Naive thymus-derived CD4-positive, alpha-beta T cell (primary cell): ENCODE measurements at regions of chr7 and their contacts with region 1.

Region 1: GRCh38 chr7:75531359-75531821 is 39.3 kb downstream of the SPDYE5 start:
- DNase-seq: no peak
- ATAC-seq: no peak
- H3K4me3 ChIP-seq: no peak overlapping the region
- H3K4me3 Mint-ChIP-seq: no peak overlapping the region
- H3K27ac ChIP-seq: no peak overlapping the region
- H3K27ac Mint-ChIP-seq: peak overlapping the region in 1 of 9 donors; percentile 47
- H3K4me1 ChIP-seq: peaks cover 2 to 8% of the 10 kb centered on the region in 2 donors
- H3K4me1 Mint-ChIP-seq: peaks cover 14 to 19% (median 15%) of the 10 kb centered on the region in 7 donors
- H3K27me3 ChIP-seq: no peaks in the 10 kb centered on the region
- H3K27me3 Mint-ChIP-seq: no peaks in the 10 kb centered on the region

Region 2: DNA sequence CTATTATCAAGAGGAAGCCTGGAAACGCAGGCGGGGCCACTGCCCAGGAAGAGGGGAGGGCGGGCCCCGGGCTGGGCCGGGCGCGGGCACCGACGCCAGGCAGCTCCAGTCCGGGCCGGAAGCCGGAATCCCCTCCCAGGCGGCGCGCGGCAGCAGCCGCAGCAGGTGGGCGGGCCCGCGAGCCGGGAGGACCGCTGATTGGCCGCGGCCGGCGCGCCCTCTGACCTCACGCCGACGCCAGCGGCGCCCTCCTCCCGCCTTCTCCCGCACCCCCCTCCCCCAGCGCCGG is 1974.3 kb before region 1 on chr7:
- CTCF ChIA-PET with region 1: no interaction called
- POLR2A ChIA-PET with region 1: no interaction called
- intact Hi-C with region 1: loop called in 1 of 2 experiments (anchors 10 kb)
- DNase-seq: peak; percentile 86 to 95 (median 91)
- ATAC-seq: peak; percentile 93
- H3K4me3 ChIP-seq: peak overlapping the region; percentile 81
- H3K4me3 Mint-ChIP-seq: peak overlapping the region; percentile 88 to 97 (median 93)
- H3K27ac ChIP-seq: peak overlapping the region; percentile 100
- H3K27ac Mint-ChIP-seq: peak overlapping the region; percentile 92 to 98 (median 95)
- H3K4me1 ChIP-seq: peaks cover 17 to 23% of the 10 kb centered on the region in 2 donors
- H3K4me1 Mint-ChIP-seq: peaks cover 24 to 41% (median 33%) of the 10 kb centered on the region in 7 donors
- H3K27me3 ChIP-seq: no peaks in the 10 kb centered on the region
- H3K27me3 Mint-ChIP-seq: no peaks in the 10 kb centered on the region

Region 3: GRCh38 chr7:74709880-74710671 is 821.3 kb before region 1 on chr7:
- CTCF ChIA-PET with region 1: no interaction called
- POLR2A ChIA-PET with region 1: no interaction called
- intact Hi-C with region 1: no loop called
- DNase-seq: no peak
- ATAC-seq: no peak
- H3K4me3 ChIP-seq: no peak overlapping the region
- H3K4me3 Mint-ChIP-seq: no peak overlapping the region
- H3K27ac ChIP-seq: no peak overlapping the region
- H3K27ac Mint-ChIP-seq: peak overlapping the region in 1 of 9 donors; percentile 66
- H3K4me1 ChIP-seq: no peaks in the 10 kb centered on the region
- H3K4me1 Mint-ChIP-seq: peaks cover 0 to 4% (median 0%) of the 10 kb centered on the region in 7 donors
- H3K27me3 ChIP-seq: no peaks in the 10 kb centered on the region
- H3K27me3 Mint-ChIP-seq: no peaks in the 10 kb centered on the region

Region 4: DNA sequence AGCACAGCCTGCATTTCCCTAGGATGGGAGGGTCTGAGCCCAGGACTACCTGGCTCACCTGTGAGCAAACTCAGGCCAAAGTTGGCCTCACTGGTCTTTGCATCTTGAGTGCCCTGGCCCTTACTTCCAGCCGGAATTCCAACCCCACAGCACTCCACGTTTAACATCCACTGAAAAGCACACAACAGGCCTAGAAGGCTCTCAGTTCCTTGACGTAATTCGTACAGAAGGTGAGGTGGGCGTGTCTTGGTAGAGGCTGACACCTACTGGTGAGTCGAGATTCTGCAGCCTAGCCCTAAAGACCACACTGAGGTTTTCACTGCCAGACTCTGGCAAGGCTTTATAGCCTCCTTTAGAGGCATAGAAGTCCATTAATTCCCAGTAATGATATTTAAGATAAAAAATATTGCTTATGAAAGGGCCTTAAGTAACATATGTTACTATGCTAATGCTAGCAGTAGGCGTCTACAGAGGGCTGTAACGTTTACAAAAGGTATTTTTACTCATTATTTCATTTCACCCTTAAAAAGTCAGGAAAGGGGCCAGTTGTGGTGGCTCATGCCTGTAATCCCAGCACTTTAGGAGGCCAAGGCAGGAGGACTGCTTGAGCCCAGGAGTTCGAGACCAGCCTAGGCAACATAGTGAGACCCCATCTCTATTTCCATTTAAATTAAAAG is 111.6 kb after region 1 on chr7:
- CTCF ChIA-PET with region 1: no interaction called
- POLR2A ChIA-PET with region 1: no interaction called
- intact Hi-C with region 1: loop called (anchors 5 kb)
- DNase-seq: peak; percentile 41 to 73 (median 64)
- ATAC-seq: peak; percentile 96
- H3K4me3 ChIP-seq: no peak overlapping the region
- H3K4me3 Mint-ChIP-seq: peak overlapping the region in 3 of 10 donors; percentile 25 to 31 (median 29)
- H3K27ac ChIP-seq: no peak overlapping the region
- H3K27ac Mint-ChIP-seq: peak overlapping the region in 5 of 9 donors; percentile 15 to 75 (median 56)
- H3K4me1 ChIP-seq: peaks cover 8 to 9% of the 10 kb centered on the region in 2 donors
- H3K4me1 Mint-ChIP-seq: peaks cover 6 to 18% (median 11%) of the 10 kb centered on the region in 7 donors
- H3K27me3 ChIP-seq: no peaks in the 10 kb centered on the region
- H3K27me3 Mint-ChIP-seq: peaks cover 0 to 23% (median 0%) of the 10 kb centered on the region in 5 donors

Region 5: DNA sequence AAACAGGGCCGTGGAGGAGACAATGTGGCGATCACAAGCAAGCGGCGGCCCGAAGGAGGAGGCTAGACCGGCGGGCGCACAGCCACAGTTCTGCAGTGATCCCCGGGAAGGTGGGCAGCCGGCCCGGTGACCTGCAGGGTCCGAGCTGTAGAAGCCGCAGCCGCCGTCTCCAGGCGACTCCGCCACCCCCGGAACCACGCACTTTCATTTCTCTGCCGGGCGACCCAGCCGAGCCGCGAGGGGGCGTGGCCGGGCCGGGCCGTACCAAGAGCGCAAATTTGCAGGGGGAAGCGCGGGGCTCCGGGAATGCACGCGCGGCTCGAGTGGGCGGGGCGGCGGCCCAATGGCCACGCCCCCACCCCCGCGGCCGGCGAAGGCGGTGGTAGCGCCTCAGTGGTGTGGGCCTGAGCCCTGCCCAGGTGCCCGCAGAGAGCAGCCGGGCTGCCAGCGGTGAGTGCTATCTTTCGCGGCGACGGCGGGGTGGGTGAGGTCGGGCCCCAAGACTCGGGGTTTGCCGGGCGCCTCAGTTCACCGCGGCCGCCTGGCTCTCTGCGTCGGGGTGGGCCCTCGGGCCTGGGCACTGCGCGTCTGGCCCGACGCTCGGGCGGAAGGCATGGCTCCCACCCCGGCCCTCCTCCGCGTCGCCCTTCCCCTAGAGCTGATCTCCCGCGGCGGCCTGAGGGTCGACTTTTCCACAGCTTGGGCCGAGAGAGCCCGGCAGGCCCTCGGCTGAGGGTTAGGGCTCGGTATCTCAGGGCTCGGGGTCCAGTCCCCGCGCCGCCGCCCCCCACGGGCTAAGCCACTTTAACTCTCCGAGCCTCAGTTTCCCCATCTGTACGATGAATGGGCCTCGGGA is 383.6 kb after region 1 on chr7 and contains the start of gene POR:
- CTCF ChIA-PET with region 1: no interaction called
- POLR2A ChIA-PET with region 1: no interaction called
- intact Hi-C with region 1: loop called in 1 of 2 experiments (anchors 1 kb)
- DNase-seq: peak; percentile 93 to 100 (median 99)
- ATAC-seq: peak; percentile 99
- H3K4me3 ChIP-seq: peak within 1 kb of the TSS; percentile 79
- H3K4me3 Mint-ChIP-seq: peak within 1 kb of the TSS; percentile 91 to 94 (median 92)
- H3K27ac ChIP-seq: peak within 1 kb of the TSS; percentile 100
- H3K27ac Mint-ChIP-seq: peak within 1 kb of the TSS; percentile 94 to 99 (median 98)
- H3K4me1 ChIP-seq: peaks cover 12 to 19% of the 10 kb centered on the region in 2 donors
- H3K4me1 Mint-ChIP-seq: peaks cover 18 to 50% (median 35%) of the 10 kb centered on the region in 7 donors
- H3K27me3 ChIP-seq: no peaks in the 10 kb centered on the region
- H3K27me3 Mint-ChIP-seq: peaks cover 0 to 3% (median 0%) of the 10 kb centered on the region in 5 donors
- total RNA-seq, gene POR: 45.9 to 72.3 (median 69.7) TPM

Region 6: GRCh38 chr7:76393116-76394031 is 862.0 kb after region 1 on chr7:
- CTCF ChIA-PET with region 1: no interaction called
- POLR2A ChIA-PET with region 1: no interaction called
- intact Hi-C with region 1: loop called in 1 of 2 experiments (anchors 10 kb)
- DNase-seq: peak; percentile 86 to 96 (median 92)
- ATAC-seq: peak; percentile 89
- H3K4me3 ChIP-seq: peak overlapping the region; percentile 84
- H3K4me3 Mint-ChIP-seq: peak overlapping the region; percentile 78 to 93 (median 90)
- H3K27ac ChIP-seq: peak overlapping the region; percentile 74
- H3K27ac Mint-ChIP-seq: peak overlapping the region; percentile 86 to 97 (median 95)
- H3K4me1 ChIP-seq: peaks cover 14 to 20% of the 10 kb centered on the region in 2 donors
- H3K4me1 Mint-ChIP-seq: peaks cover 8 to 29% (median 23%) of the 10 kb centered on the region in 7 donors
- H3K27me3 ChIP-seq: no peaks in the 10 kb centered on the region
- H3K27me3 Mint-ChIP-seq: no peaks in the 10 kb centered on the region